Ovary (tissue), 10 donors: ENCODE measurements at regions of chr2 and their contacts with region 1.

Region 1: GRCh38 chr2:109545828-109546713 is 67.7 kb downstream of the SEPTIN10 start:
- DNase-seq: peak; percentile 53 to 85 (median 75)
- H3K4me3 ChIP-seq: no peak overlapping the region
- H3K27ac ChIP-seq: no peak overlapping the region
- H3K4me1 ChIP-seq: no peaks in the 10 kb centered on the region
- H3K27me3 ChIP-seq: no peaks in the 10 kb centered on the region
- CTCF ChIP-seq: peak; percentile 80 to 92 (median 85)
- EP300 ChIP-seq: no peak
- POLR2A ChIP-seq: no peak

Region 2: DNA sequence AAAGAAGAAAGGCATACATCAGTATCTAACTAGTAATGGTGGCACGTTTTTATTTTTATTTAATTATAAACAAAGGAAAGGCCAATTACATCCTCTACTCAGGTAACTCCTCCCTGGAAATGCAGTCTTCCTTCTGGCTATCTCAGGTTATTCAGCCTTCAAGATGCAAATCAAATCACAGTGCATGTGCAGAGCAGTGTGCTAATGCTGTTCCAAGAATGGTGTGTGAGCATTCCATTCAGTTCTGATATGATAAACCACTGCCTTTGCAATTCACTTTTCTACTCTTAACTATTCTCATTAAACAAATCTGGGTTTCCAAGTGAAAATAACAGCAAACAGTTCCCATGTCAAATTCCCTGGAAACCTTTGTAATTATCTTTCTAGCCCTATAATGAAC is 29.3 kb after region 1 on chr2:
- intact Hi-C with region 1: no loop called
- DNase-seq: no peak
- H3K4me3 ChIP-seq: no peak overlapping the region
- H3K27ac ChIP-seq: no peak overlapping the region
- H3K4me1 ChIP-seq: no peaks in the 10 kb centered on the region
- H3K27me3 ChIP-seq: no peaks in the 10 kb centered on the region
- CTCF ChIP-seq: no peak
- EP300 ChIP-seq: no peak
- POLR2A ChIP-seq: no peak

Region 3: DNA sequence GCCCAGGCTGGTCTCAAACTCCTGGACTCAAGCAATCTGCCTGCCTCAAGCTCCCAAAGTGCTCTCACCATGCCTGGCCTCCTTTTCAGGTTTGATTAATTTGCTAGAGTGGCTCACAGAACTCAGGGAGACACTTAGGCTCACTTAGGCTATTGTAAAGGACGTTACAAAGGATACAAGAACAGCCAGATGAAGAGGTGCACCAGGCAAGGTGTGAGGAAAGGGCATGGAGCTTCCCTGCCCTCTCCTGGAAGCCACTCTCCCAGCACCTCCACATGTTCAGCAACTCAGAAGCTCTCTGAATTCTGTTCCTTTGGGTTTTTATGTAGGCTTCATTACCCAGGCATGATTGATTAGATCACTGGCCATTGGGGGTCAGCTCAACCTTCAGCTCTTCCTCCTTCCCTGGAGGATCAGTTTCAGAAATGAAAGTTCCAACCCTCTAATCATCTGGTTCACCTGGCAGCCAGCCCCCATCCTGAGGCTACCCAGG is 169.3 kb after region 1 on chr2:
- intact Hi-C with region 1: loop called in 3 of 4 experiments (anchors 10 kb)
- DNase-seq: peak in 1 of 5 donors; percentile 13
- H3K4me3 ChIP-seq: no peak overlapping the region
- H3K27ac ChIP-seq: no peak overlapping the region
- H3K4me1 ChIP-seq: no peaks in the 10 kb centered on the region
- H3K27me3 ChIP-seq: no peaks in the 10 kb centered on the region
- CTCF ChIP-seq: peak in 2 of 3 donors; percentile 11 to 12
- EP300 ChIP-seq: no peak
- POLR2A ChIP-seq: no peak

Region 4: GRCh38 chr2:109726379-109727270 is 180.6 kb after region 1 on chr2:
- intact Hi-C with region 1: loop called in 3 of 4 experiments (anchors 5 kb)
- DNase-seq: peak in 2 of 5 donors; percentile 4 to 16
- H3K4me3 ChIP-seq: no peak overlapping the region
- H3K27ac ChIP-seq: no peak overlapping the region
- H3K4me1 ChIP-seq: peaks cover 9% of the 10 kb centered on the region
- H3K27me3 ChIP-seq: no peaks in the 10 kb centered on the region
- CTCF ChIP-seq: no peak
- EP300 ChIP-seq: no peak
- POLR2A ChIP-seq: no peak

Region 5: GRCh38 chr2:109736177-109736827 is 190.2 kb after region 1 on chr2:
- intact Hi-C with region 1: loop called in 2 of 4 experiments (anchors 5 kb)
- DNase-seq: peak; percentile 55 to 81 (median 62)
- H3K4me3 ChIP-seq: no peak overlapping the region
- H3K27ac ChIP-seq: no peak overlapping the region
- H3K4me1 ChIP-seq: no peaks in the 10 kb centered on the region
- H3K27me3 ChIP-seq: no peaks in the 10 kb centered on the region
- CTCF ChIP-seq: peak; percentile 70 to 81 (median 73)
- EP300 ChIP-seq: no peak
- POLR2A ChIP-seq: no peak

Region 6: DNA sequence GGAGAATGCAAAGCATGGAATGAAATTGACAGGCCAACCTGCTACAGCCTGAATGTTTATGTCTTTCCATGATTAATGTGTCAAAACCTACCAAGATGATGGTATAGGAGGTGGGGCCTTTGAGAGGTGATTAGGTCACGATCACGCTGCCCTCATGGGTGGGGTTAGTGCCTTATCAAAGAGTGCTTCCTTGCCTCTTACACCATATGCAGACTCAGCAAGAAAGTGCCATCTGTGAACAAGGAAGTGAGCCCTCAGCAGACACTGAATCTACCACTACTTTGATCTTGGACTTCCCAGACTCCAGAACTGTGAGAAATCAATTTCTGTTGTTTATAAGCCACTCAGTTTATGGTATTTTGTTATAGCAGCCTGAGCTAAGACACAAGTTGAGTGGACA is 1427.2 kb after region 1 on chr2:
- intact Hi-C with region 1: no loop called
- DNase-seq: no peak
- H3K4me3 ChIP-seq: no peak overlapping the region
- H3K27ac ChIP-seq: no peak overlapping the region
- H3K4me1 ChIP-seq: no peaks in the 10 kb centered on the region
- H3K27me3 ChIP-seq: no peaks in the 10 kb centered on the region
- CTCF ChIP-seq: no peak
- EP300 ChIP-seq: no peak
- POLR2A ChIP-seq: no peak